ENCODE measurements at regions of chr20 and their contacts with region 1.

Region 1: GRCh38 chr20:3686867-3687321 is 5.1 kb upstream of the ADAM33 start:
- DNase-seq: peak; percentile 89 to 94 (median 90)
- ATAC-seq: peak; percentile 85 to 88
- H3K4me3 ChIP-seq: no peak overlapping the region
- H3K27ac ChIP-seq: peak overlapping the region; percentile 85
- H3K4me1 ChIP-seq: peaks cover 2% of the 10 kb centered on the region
- H3K27me3 ChIP-seq: no peaks in the 10 kb centered on the region

Region 2: GRCh38 chr20:3760655-3761348 is 73.9 kb after region 1 on chr20:
- intact Hi-C with region 1: no loop called
- DNase-seq: no peak
- ATAC-seq: no peak
- H3K4me3 ChIP-seq: no peak overlapping the region
- H3K27ac ChIP-seq: no peak overlapping the region
- H3K4me1 ChIP-seq: no peaks in the 10 kb centered on the region
- H3K27me3 ChIP-seq: no peaks in the 10 kb centered on the region

Region 3: GRCh38 chr20:3854462-3854871 is 167.6 kb after region 1 on chr20:
- intact Hi-C with region 1: loop called in 1 of 4 experiments (anchors 10 kb)
- DNase-seq: no peak
- ATAC-seq: peak; percentile 45 to 52
- H3K4me3 ChIP-seq: no peak overlapping the region
- H3K27ac ChIP-seq: no peak overlapping the region
- H3K4me1 ChIP-seq: no peaks in the 10 kb centered on the region
- H3K27me3 ChIP-seq: no peaks in the 10 kb centered on the region

Measured in right cardiac atrium (tissue), 5 donors.